PC-9 (cell line): ENCODE measurements at regions of chr1 and their contacts with region 1.

Region 1: GRCh38 chr1:85109475-85109874 is 61.2 kb upstream of the MCOLN3 start:
- DNase-seq: peak; percentile 40 to 62
- H3K4me3 ChIP-seq: no peak overlapping the region
- H3K27ac ChIP-seq: no peak overlapping the region
- H3K4me1 ChIP-seq: no peaks in the 10 kb centered on the region
- H3K27me3 ChIP-seq: no peaks in the 10 kb centered on the region
- CTCF ChIP-seq: peak; percentile 91

Region 2: GRCh38 chr1:85087659-85088407 is 21.6 kb before region 1 on chr1:
- CTCF ChIA-PET with region 1: no interaction called
- POLR2A ChIA-PET with region 1: no interaction called
- intact Hi-C with region 1: no loop called
- DNase-seq: no peak
- H3K4me3 ChIP-seq: no peak overlapping the region
- H3K27ac ChIP-seq: no peak overlapping the region
- H3K4me1 ChIP-seq: no peaks in the 10 kb centered on the region
- H3K27me3 ChIP-seq: no peaks in the 10 kb centered on the region
- CTCF ChIP-seq: no peak

Region 3: DNA sequence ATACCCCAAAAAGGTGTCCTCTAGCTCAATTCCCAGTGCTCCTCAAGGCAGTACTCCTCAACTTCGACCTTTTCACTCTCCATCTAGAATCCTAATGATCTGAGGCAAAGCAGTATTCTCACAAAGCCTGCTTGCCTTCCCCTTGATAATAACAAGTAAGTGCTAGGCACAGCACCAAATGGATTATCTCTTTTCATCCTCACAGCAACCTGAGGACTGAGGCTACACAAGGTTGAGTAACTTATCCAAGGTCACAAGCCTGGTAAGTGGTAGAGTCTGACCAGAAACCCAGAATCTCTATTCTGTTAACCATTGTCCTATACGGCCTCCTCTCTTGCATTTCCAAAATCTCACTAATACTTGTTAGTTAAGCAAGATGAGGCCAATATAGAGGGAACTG is 86.2 kb after region 1 on chr1:
- CTCF ChIA-PET with region 1: no interaction called
- POLR2A ChIA-PET with region 1: no interaction called
- intact Hi-C with region 1: loop called (anchors 2 kb)
- DNase-seq: no peak
- H3K4me3 ChIP-seq: no peak overlapping the region
- H3K27ac ChIP-seq: no peak overlapping the region
- H3K4me1 ChIP-seq: peaks cover 42% of the 10 kb centered on the region
- H3K27me3 ChIP-seq: no peaks in the 10 kb centered on the region
- CTCF ChIP-seq: no peak

Region 4: GRCh38 chr1:85220756-85221201 is 111.3 kb after region 1 on chr1:
- CTCF ChIA-PET with region 1: no interaction called
- POLR2A ChIA-PET with region 1: no interaction called
- intact Hi-C with region 1: no loop called
- DNase-seq: no peak
- H3K4me3 ChIP-seq: no peak overlapping the region
- H3K27ac ChIP-seq: no peak overlapping the region
- H3K4me1 ChIP-seq: peaks cover 30% of the 10 kb centered on the region
- H3K27me3 ChIP-seq: no peaks in the 10 kb centered on the region
- CTCF ChIP-seq: no peak

Region 5: DNA sequence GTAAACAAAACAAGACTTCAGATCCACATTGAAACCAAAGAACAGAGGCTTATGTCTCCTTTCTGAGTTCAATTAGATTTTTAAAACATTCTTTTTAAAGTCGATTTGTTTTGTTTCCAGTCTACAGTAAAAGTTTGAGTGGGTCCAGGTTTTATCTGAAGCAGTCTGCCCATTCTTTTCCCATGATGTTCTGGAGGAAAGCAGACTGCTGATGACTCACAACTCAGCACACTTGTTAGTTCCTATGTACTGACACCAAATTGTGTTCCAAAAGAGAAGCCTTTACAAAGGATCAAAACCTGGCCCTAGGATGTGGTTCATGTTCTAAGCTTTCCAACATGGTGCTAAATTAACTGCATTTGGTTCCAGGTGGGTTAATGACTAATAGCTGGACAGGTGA is 459.6 kb after region 1 on chr1:
- CTCF ChIA-PET with region 1: no interaction called
- POLR2A ChIA-PET with region 1: no interaction called
- intact Hi-C with region 1: no loop called
- DNase-seq: no peak
- H3K4me3 ChIP-seq: no peak overlapping the region
- H3K27ac ChIP-seq: no peak overlapping the region
- H3K4me1 ChIP-seq: peaks cover 49% of the 10 kb centered on the region
- H3K27me3 ChIP-seq: no peaks in the 10 kb centered on the region
- CTCF ChIP-seq: no peak

Region 6: DNA sequence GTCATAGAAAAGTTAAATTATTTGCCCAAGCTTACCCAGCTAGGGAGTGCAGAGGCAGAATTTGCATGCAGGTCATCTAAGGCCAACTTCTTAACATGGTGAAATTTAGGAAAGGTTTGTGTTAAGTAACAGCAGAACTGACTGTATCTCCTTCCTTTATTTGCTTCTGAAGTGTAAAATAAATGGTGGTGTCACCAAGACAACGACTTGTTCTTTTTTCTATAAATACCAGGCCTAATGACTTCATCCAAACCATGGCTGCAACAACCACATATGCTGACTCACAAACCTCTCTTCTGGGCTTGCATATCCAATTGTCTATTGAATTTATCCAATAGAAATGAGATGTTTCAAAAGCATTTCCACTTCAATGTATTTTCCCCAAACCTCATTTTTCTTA is 1028.0 kb after region 1 on chr1:
- CTCF ChIA-PET with region 1: no interaction called
- POLR2A ChIA-PET with region 1: no interaction called
- intact Hi-C with region 1: no loop called
- DNase-seq: no peak
- H3K4me3 ChIP-seq: no peak overlapping the region
- H3K27ac ChIP-seq: no peak overlapping the region
- H3K4me1 ChIP-seq: no peaks in the 10 kb centered on the region
- H3K27me3 ChIP-seq: no peaks in the 10 kb centered on the region
- CTCF ChIP-seq: no peak